AG04449 (cell line): ENCODE measurements at regions of chr10 and their contacts with region 1.

Region 1: GRCh38 chr10:98309366-98310355 is 41.7 kb upstream of the LOXL4 start:
- DNase-seq: peak; percentile 16
- H3K4me3 ChIP-seq: peak overlapping the region; percentile 15
- CTCF ChIP-seq: peak; percentile 96

Region 2: DNA sequence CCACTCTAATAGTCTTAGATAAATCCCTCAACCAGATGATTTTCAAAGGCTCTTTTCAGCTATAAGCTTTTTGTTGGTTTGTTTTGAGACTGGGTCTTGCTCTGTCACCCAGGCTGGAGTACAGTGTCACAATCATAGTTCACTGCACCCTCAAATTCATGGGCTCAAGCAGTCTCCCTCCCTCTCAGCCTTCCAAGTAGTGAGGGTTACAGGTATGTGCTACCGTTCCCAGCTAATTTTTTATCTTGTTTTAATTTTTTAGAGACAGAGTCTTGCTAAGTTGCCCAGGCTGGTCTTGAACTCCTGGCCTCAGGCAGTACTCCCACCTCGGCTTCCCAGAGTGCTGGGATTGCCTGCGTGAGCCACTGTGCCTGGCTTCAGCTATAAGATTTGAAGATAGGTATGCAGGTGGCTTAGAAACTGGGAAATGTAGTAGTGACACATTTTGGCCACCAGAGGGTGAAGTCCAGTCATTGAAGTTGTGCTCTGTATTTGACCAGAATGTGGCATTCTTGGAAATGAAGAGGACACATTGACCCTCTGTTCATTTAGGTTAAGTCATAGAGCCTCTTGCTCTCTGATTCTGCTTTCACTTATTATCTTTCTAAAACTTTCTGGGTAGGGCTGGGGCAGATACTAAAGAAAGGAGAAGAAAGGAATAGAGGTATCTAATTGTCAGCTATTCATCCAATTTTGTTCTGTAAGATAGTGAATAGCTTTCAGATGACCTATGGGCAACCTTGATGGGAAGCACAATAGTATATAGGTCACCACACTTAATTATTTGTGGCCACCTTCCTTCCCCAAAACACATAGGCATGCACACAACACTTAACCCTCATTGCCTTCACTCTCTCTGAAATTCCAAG is 139.2 kb before region 1 on chr10:
- CTCF ChIA-PET with region 1: interaction called, 99 read pairs
- POLR2A ChIA-PET with region 1: no interaction called
- DNase-seq: no peak
- H3K4me3 ChIP-seq: no peak overlapping the region
- CTCF ChIP-seq: peak; percentile 70

Region 3: GRCh38 chr10:98253499-98253898 is 56.2 kb before region 1 on chr10:
- CTCF ChIA-PET with region 1: interaction called, 109 read pairs
- POLR2A ChIA-PET with region 1: no interaction called
- DNase-seq: no peak
- H3K4me3 ChIP-seq: no peak overlapping the region
- CTCF ChIP-seq: no peak

Region 4: GRCh38 chr10:98285416-98285815 is 24.2 kb before region 1 on chr10:
- CTCF ChIA-PET with region 1: interaction called, 14 read pairs
- POLR2A ChIA-PET with region 1: no interaction called
- DNase-seq: no peak
- H3K4me3 ChIP-seq: no peak overlapping the region
- CTCF ChIP-seq: no peak

Region 5: GRCh38 chr10:98323221-98324164 is 13.8 kb after region 1 on chr10:
- CTCF ChIA-PET with region 1: interaction called, 64 read pairs
- POLR2A ChIA-PET with region 1: interaction called, 8 read pairs
- DNase-seq: peak; percentile 85
- H3K4me3 ChIP-seq: no peak overlapping the region
- CTCF ChIP-seq: no peak

Region 6: DNA sequence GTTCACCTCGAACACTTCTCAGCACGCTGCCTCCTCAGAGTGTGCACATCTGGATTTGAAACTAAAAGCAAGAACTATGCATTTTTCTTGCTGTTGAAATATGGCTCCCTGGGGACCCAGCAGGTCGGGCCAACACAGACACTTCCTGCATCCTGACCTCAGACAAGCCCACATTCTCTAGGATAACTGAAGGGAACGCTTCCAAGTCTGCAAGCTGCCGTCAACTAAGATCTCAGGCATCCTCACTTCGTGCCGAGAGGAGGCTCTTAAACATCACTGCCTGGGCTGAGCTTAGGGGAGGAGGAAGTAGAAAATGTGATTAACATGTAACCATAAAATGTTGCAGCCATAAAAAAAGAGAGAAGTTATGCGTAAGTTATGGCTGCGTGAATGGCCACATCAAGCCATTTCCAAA is 39.9 kb after region 1 on chr10:
- CTCF ChIA-PET with region 1: interaction called, 12 read pairs
- POLR2A ChIA-PET with region 1: interaction called, 4 read pairs
- DNase-seq: peak; percentile 100
- H3K4me3 ChIP-seq: no peak overlapping the region; the same call in 1 of the 2 replicates
- CTCF ChIP-seq: no peak

Region 7: DNA sequence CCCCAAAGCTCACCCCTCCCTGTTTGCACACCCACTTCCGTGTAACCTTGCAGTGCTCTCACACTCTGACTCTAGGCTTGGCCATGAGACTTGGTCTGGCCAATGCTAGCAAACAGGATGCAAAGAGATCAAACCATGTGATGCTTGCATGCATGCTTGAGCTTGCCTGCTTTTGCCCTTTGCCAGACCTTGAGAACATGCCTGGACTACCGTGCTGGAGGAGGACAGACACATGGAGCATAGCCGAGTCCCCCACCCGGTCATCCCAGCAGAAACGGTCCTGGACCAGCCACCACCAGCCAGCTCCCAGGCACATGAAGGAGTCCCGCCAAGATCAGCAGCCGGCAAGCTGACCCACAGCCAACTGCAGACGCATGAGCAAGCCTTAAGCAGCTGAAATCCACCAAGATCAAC is 81.9 kb after region 1 on chr10:
- CTCF ChIA-PET with region 1: interaction called, 77 read pairs
- POLR2A ChIA-PET with region 1: interaction called, 4 read pairs
- DNase-seq: no peak
- H3K4me3 ChIP-seq: no peak overlapping the region
- CTCF ChIP-seq: no peak

Region 8: GRCh38 chr10:99234041-99234790 is 924.6 kb after region 1 on chr10:
- CTCF ChIA-PET with region 1: no interaction called
- POLR2A ChIA-PET with region 1: no interaction called
- DNase-seq: no peak
- H3K4me3 ChIP-seq: peak overlapping the region; percentile 52
- CTCF ChIP-seq: no peak